Right ventricle myocardium superior (tissue), 1 donor: ENCODE measurements at regions of chr3 and their contacts with region 1.

Region 1: GRCh38 chr3:47324278-47324865 is 41.6 kb downstream of the KLHL18 start:
- DNase-seq: no peak
- ATAC-seq: peak; percentile 95

Region 2: DNA sequence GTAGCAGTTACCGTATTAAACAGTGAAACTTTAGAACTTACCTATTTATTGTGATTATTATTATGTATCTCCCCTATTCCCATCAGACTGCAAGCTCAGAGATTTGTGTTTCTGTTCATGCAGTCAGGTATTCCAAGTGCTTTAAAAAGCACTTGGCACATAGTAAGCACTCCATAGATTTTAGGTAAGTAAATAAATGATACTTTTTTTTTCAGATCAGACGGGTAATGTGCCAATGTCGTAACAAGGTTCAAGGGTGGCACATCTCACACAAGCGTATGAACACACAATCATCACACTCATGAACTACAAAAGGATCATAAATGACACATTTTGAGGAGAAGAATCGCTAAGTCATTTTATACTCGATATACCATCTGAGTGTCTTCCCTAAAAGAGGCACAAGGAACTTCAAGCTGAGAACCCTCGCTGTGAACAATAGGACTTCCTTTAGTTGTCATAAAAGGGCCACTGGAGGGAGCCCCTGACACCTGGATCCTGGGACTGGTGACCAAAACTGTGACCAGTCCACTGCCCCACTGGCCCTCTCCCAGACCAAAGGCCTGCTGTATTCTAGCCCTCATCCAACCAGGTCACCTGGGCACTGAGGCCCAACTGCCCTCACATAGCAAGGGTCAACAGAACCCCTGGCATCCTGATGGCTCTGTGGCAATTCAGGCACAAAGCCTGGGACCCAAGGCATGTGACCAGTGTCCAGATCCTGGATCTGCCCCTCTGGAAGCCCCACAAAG is 73.9 kb before region 1 on chr3:
- intact Hi-C with region 1: loop called (anchors 5 kb)
- DNase-seq: peak; percentile 46
- ATAC-seq: peak; percentile 78